Psoas muscle (tissue), 8 donors: ENCODE measurements at regions of chr4 and their contacts with region 1.

Region 1: GRCh38 chr4:102234243-102234838 is 110.9 kb downstream of the SLC39A8 start:
- DNase-seq: no peak
- ATAC-seq: no peak
- H3K4me3 ChIP-seq: no peak overlapping the region
- H3K27ac ChIP-seq: no peak overlapping the region
- H3K4me1 ChIP-seq: no peaks in the 10 kb centered on the region
- H3K27me3 ChIP-seq: no peaks in the 10 kb centered on the region
- CTCF ChIP-seq: no peak

Region 2: DNA sequence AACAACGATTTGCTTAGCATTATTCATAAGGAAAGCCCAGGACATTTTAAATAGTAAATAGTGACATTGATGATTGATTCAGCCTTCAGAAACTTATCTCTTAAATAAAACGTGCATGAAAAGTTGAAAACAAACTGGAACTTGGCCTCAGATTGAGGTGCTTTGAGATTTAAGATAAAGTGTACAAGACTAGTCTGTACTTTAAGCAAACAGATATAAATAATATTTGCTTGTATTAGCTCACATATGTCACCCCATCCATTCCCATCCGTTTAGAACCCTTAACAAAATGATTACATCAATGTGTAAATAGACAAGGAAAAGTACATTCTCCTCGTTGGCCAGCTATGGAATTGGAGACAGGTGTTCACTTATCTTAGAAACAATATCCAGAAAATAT is 313.0 kb before region 1 on chr4:
- intact Hi-C with region 1: no loop called
- DNase-seq: no peak
- ATAC-seq: no peak
- H3K4me3 ChIP-seq: no peak overlapping the region
- H3K27ac ChIP-seq: no peak overlapping the region
- H3K4me1 ChIP-seq: no peaks in the 10 kb centered on the region
- H3K27me3 ChIP-seq: no peaks in the 10 kb centered on the region
- CTCF ChIP-seq: no peak

Region 3: DNA sequence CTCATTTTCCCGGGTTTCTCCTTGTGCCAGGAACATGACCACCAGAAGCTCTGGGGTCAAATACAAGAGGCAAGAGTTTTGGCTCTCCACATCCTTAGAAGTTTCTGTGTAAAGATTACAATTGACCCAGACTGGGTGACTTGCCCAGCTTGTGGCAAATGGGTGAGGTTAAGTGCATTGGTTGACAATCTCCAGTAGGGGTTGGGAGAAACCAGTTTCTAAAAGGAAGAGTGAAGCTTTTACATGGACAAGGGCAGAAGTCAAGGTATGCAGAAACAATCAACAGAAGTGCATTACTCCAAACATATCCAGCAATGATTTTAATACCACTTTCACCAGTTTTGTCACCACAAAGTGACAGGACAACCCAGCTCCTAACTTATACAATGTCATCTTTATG is 21.1 kb after region 1 on chr4:
- intact Hi-C with region 1: no loop called
- DNase-seq: no peak
- ATAC-seq: no peak
- H3K4me3 ChIP-seq: no peak overlapping the region
- H3K27ac ChIP-seq: no peak overlapping the region
- H3K4me1 ChIP-seq: no peaks in the 10 kb centered on the region
- H3K27me3 ChIP-seq: no peaks in the 10 kb centered on the region
- CTCF ChIP-seq: no peak

Region 4: GRCh38 chr4:102299354-102300107 is 65.2 kb after region 1 on chr4:
- intact Hi-C with region 1: loop called in 1 of 2 experiments (anchors 1 kb)
- DNase-seq: no peak
- ATAC-seq: no peak
- H3K4me3 ChIP-seq: no peak overlapping the region
- H3K27ac ChIP-seq: no peak overlapping the region
- H3K4me1 ChIP-seq: no peaks in the 10 kb centered on the region
- H3K27me3 ChIP-seq: no peaks in the 10 kb centered on the region
- CTCF ChIP-seq: peak; percentile 41